CD8-positive, alpha-beta T cell (primary cell): ENCODE measurements at regions of chr21 and their contacts with region 1.

Region 1: GRCh38 chr21:31180256-31181081 is 142.2 kb upstream of the KRTAP19-8 start:
- DNase-seq: peak in 3 of 9 experiments; percentile 24 to 69 (median 55)
- ATAC-seq: no peak
- H3K4me3 ChIP-seq: no peak overlapping the region
- H3K4me3 Mint-ChIP-seq: peak overlapping the region; percentile 62
- H3K27ac ChIP-seq: peak overlapping the region in 1 of 2 experiments; percentile 2
- H3K27ac Mint-ChIP-seq: peak overlapping the region; percentile 94
- H3K4me1 ChIP-seq: peaks cover 68% of the 10 kb centered on the region
- H3K4me1 Mint-ChIP-seq: peaks cover 71% of the 10 kb centered on the region
- H3K27me3 ChIP-seq: no peaks in the 10 kb centered on the region
- H3K27me3 Mint-ChIP-seq: no peaks in the 10 kb centered on the region
- CTCF ChIP-seq: peak; percentile 35

Region 2: DNA sequence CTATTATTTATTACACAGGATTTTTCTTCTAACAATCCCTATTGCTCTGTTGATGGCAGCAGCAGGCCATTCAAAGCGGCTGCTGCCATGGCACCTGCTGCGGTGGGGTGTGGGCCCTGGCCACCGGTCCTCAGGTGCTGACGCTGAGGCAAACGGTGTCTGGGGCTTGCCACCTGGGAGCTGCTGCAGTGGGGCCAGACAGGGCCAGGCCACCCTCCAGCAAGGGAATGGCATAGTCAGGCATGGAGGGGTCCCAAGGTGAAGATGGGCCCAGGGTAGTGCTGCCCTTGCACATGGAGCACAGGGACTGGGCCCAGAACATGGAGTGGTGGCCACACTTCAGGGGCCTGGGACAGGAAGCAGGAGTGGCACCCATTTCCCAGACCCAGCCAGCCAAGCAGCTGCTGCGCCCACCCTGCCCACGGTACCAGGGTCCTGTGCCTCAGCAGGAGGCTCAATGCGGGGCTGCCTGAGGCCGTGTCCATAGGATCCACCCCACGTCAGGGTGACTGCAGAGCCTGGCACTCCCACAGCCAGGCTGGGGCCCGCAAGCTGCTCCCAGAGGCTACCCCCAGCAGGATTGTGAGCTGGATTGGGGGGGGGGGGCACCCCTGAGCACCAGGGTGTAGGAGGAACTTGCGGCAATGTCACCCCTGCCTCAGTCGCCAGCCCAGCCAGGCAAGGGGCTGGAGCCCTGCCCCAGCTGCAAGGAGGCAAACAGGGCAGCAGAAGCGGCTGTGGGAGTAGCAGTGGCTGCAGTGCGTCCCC is 245.2 kb before region 1 on chr21:
- CTCF ChIA-PET with region 1: no interaction called
- POLR2A ChIA-PET with region 1: no interaction called
- intact Hi-C with region 1: no loop called
- DNase-seq: no peak
- ATAC-seq: no peak
- H3K4me3 ChIP-seq: no peak overlapping the region
- H3K4me3 Mint-ChIP-seq: no peak overlapping the region
- H3K27ac ChIP-seq: no peak overlapping the region
- H3K27ac Mint-ChIP-seq: no peak overlapping the region
- H3K4me1 ChIP-seq: no peaks in the 10 kb centered on the region
- H3K4me1 Mint-ChIP-seq: no peaks in the 10 kb centered on the region
- H3K27me3 ChIP-seq: no peaks in the 10 kb centered on the region
- H3K27me3 Mint-ChIP-seq: peaks cover 3% of the 10 kb centered on the region
- CTCF ChIP-seq: no peak

Region 3: GRCh38 chr21:31107871-31108270 is 72.6 kb before region 1 on chr21:
- CTCF ChIA-PET with region 1: interaction called, 101 read pairs
- POLR2A ChIA-PET with region 1: interaction called, 7 read pairs
- intact Hi-C with region 1: loop called in 1 of 2 experiments (anchors 1 kb)
- DNase-seq: no peak
- ATAC-seq: no peak
- H3K4me3 ChIP-seq: no peak overlapping the region
- H3K4me3 Mint-ChIP-seq: no peak overlapping the region
- H3K27ac ChIP-seq: no peak overlapping the region
- H3K27ac Mint-ChIP-seq: peak overlapping the region; percentile 12
- H3K4me1 ChIP-seq: no peaks in the 10 kb centered on the region
- H3K4me1 Mint-ChIP-seq: peaks cover 12% of the 10 kb centered on the region
- H3K27me3 ChIP-seq: no peaks in the 10 kb centered on the region
- H3K27me3 Mint-ChIP-seq: no peaks in the 10 kb centered on the region
- CTCF ChIP-seq: no peak

Region 4: DNA sequence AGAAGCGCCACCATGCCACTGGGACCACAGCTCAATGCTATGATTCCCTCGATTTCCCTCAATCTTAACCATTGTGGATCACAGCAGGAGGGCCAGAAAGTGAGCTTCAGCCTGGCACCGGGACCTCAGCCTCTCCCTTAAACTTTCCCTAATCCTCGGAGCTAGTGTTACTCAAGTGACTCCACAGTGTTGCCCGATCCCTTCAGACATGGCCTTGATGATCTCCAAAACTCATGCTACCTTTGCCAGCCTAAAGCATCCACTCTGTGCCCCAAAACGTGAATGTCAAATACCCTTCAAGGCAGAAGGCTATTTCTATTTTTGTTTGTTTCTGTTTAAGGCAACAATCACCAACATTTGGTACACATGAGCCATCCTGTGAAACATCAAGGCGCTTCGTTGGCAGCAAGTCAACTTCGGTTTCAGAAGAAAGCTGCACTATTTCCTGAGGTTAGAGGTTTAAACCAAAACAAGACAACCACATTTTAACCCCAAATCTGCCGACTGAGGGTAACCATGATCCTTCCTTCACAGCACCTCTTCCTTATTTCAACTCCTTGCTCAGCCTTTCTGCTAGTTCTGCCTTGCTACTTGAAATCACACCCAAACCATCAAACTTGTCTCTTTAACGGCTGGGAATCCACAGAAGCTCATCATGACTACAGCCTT is 47.8 kb before region 1 on chr21:
- CTCF ChIA-PET with region 1: interaction called, 33 read pairs
- POLR2A ChIA-PET with region 1: interaction called, 10 read pairs
- intact Hi-C with region 1: loop called (anchors 2 to 5 kb)
- DNase-seq: peak; percentile 47 to 92 (median 77)
- ATAC-seq: peak; percentile 91
- H3K4me3 ChIP-seq: peak overlapping the region; percentile 10 to 42
- H3K4me3 Mint-ChIP-seq: peak overlapping the region; percentile 80
- H3K27ac ChIP-seq: no peak overlapping the region
- H3K27ac Mint-ChIP-seq: peak overlapping the region; percentile 58
- H3K4me1 ChIP-seq: peaks cover 35% of the 10 kb centered on the region
- H3K4me1 Mint-ChIP-seq: peaks cover 47% of the 10 kb centered on the region
- H3K27me3 ChIP-seq: peaks cover 0 to 4% of the 10 kb centered on the region in 2 experiments
- H3K27me3 Mint-ChIP-seq: peaks cover 3% of the 10 kb centered on the region
- CTCF ChIP-seq: no peak

Region 5: DNA sequence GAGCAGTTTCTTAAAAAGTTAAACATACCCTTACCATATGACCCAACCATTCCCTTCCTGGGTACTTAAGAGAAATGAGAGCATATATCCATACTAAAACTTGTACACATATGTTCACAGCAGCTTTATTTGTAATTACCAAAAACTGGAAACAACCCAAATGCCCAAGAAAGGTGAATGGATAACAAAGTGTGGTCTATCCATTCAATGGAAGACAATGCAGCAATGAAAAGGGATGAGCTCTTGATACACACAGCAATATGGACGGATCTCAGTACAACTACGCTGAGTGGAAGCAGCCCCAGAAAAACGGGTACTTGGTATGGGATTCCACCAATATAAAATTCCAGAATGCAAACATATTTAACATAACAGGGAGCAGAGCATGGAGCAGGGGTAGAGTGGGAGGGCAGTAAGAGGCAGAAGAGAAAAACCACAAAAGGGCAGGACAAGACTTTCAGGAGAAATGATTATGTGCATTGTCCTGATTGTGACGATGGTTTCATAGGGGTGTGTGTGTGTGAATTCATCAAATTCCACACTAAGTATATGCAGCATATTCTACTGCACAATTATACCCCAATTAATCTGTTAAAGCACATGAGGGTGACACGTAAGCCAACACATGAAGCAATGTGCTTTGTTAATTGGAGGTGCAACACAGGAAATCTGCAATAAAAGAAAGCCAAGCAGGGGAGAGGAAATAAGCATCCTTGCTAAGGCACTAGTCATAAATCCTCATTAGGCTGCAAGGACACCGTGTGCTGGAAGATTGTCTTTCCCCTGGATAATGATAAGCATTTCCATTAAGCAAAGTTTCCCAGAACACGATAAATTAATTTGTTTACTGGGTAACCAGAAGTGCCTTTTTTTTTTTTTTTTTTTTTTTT is 29.1 kb before region 1 on chr21:
- CTCF ChIA-PET with region 1: interaction called, 30 read pairs
- POLR2A ChIA-PET with region 1: no interaction called
- intact Hi-C with region 1: no loop called
- DNase-seq: no peak
- ATAC-seq: no peak
- H3K4me3 ChIP-seq: no peak overlapping the region
- H3K4me3 Mint-ChIP-seq: no peak overlapping the region
- H3K27ac ChIP-seq: no peak overlapping the region
- H3K27ac Mint-ChIP-seq: peak overlapping the region; percentile 32
- H3K4me1 ChIP-seq: peaks cover 17% of the 10 kb centered on the region
- H3K4me1 Mint-ChIP-seq: peaks cover 31% of the 10 kb centered on the region
- H3K27me3 ChIP-seq: no peaks in the 10 kb centered on the region
- H3K27me3 Mint-ChIP-seq: no peaks in the 10 kb centered on the region
- CTCF ChIP-seq: no peak

Region 6: DNA sequence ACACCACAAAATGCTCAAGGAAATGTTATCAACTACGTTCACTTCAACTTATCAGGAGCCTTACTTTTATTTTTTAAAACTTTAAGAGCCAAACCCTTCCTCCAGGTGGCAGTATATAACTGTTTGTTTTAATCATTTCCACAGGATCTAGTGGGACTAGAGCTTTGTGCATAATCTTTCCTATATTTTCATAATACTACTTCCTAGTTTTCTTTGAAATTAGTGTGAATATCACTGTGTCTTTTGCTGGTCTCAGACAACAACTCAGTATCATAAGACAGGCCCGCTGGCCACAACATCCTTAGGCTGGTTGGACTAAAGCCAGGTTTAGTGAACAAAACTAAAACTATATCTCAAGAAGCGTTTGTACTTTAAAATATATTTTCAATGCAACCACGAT is 18.1 kb after region 1 on chr21:
- CTCF ChIA-PET with region 1: interaction called, 40 read pairs
- POLR2A ChIA-PET with region 1: no interaction called
- intact Hi-C with region 1: no loop called
- DNase-seq: peak in 2 of 9 experiments; percentile 44 to 63
- ATAC-seq: peak; percentile 44
- H3K4me3 ChIP-seq: no peak overlapping the region
- H3K4me3 Mint-ChIP-seq: no peak overlapping the region
- H3K27ac ChIP-seq: no peak overlapping the region
- H3K27ac Mint-ChIP-seq: no peak overlapping the region
- H3K4me1 ChIP-seq: no peaks in the 10 kb centered on the region
- H3K4me1 Mint-ChIP-seq: peaks cover 18% of the 10 kb centered on the region
- H3K27me3 ChIP-seq: no peaks in the 10 kb centered on the region
- H3K27me3 Mint-ChIP-seq: no peaks in the 10 kb centered on the region
- CTCF ChIP-seq: peak; percentile 72

Region 7: GRCh38 chr21:31558962-31559367 is 378.5 kb after region 1 on chr21:
- CTCF ChIA-PET with region 1: no interaction called
- POLR2A ChIA-PET with region 1: interaction called, 4 read pairs
- intact Hi-C with region 1: loop called in 1 of 2 experiments (anchors 2 kb)
- DNase-seq: peak; percentile 76 to 93 (median 89)
- ATAC-seq: peak; percentile 83
- H3K4me3 ChIP-seq: peak overlapping the region; percentile 51 to 54
- H3K4me3 Mint-ChIP-seq: peak overlapping the region; percentile 92
- H3K27ac ChIP-seq: peak overlapping the region in 1 of 2 experiments; percentile 7
- H3K27ac Mint-ChIP-seq: no peak overlapping the region
- H3K4me1 ChIP-seq: peaks cover 15% of the 10 kb centered on the region
- H3K4me1 Mint-ChIP-seq: peaks cover 25% of the 10 kb centered on the region
- H3K27me3 ChIP-seq: peaks cover 0 to 2% of the 10 kb centered on the region in 2 experiments
- H3K27me3 Mint-ChIP-seq: peaks cover 8% of the 10 kb centered on the region
- CTCF ChIP-seq: no peak

Region 8: DNA sequence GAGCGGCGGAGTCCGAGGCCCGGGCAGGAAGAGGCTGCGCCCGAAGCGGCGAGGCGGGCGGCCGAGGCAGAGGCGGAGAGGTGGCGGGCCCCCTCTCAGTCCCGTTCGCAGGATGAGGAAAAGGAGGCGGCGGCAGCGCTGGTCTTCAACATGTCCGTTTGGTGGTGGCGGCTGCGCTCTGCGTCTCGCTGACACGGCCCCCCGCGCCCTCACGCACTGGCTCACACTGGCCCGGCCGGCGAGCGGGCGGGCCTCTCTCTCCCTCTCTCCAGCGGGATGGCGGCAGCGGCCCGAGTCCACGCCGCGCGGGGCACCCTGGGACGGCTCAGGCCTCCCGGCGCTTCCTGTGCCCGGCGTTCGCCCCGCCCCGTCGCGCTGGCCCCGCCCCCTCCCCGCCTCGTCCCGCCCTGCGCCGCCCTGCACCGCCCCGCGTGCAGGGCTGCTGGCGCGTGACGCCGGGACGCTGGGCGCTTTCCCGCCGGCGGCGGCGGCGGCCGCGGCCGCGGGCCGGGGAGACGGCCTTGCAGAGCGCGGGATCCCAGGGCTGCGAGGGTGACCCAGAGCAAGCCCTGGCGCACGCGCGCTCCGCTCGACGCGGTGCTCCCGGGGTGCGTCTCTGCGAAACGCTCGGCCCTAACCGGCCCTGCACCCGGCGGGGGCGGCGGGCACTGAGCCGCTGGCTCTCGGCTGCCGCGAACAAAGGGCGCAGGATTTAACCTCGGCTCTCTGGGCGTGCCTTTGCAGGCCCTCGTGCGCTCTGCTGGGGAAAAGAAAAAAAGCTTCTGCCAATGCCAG is 551.5 kb after region 1 on chr21 and contains the start of gene SCAF4:
- CTCF ChIA-PET with region 1: no interaction called
- POLR2A ChIA-PET with region 1: no interaction called
- intact Hi-C with region 1: loop called in 1 of 2 experiments (anchors 10 kb)
- DNase-seq: peak; percentile 58 to 89 (median 74)
- ATAC-seq: peak; percentile 87
- H3K4me3 ChIP-seq: peak within 1 kb of the TSS; percentile 73 to 93
- H3K4me3 Mint-ChIP-seq: peak within 1 kb of the TSS; percentile 90
- H3K27ac ChIP-seq: peak within 1 kb of the TSS; percentile 82 to 83
- H3K27ac Mint-ChIP-seq: peak within 1 kb of the TSS; percentile 84
- H3K4me1 ChIP-seq: peaks cover 50% of the 10 kb centered on the region
- H3K4me1 Mint-ChIP-seq: peaks cover 14% of the 10 kb centered on the region
- H3K27me3 ChIP-seq: no peaks in the 10 kb centered on the region
- H3K27me3 Mint-ChIP-seq: no peaks in the 10 kb centered on the region
- CTCF ChIP-seq: no peak
- total RNA-seq, gene SCAF4: 53.0 to 53.4 TPM